Endothelial cell of umbilical vein (primary cell): ENCODE measurements at regions of chr16 and their contacts with region 1.

Region 1: GRCh38 chr16:24580665-24581064 is 41.3 kb downstream of the RBBP6 start:
- DNase-seq: peak; percentile 55
- H3K4me3 ChIP-seq: no peak overlapping the region
- H3K27ac ChIP-seq: no peak overlapping the region
- H3K4me1 ChIP-seq: peaks cover 9% of the 10 kb centered on the region
- H3K27me3 ChIP-seq: no peaks in the 10 kb centered on the region
- CTCF ChIP-seq: peak; percentile 14 to 15
- POLR2A ChIP-seq: no peak

Region 2: GRCh38 chr16:24645739-24646645 is 65.3 kb after region 1 on chr16:
- CTCF ChIA-PET with region 1: interaction called, 4 read pairs
- POLR2A ChIA-PET with region 1: no interaction called
- dilution Hi-C with region 1: no loop called
- intact Hi-C with region 1: loop called (anchors 5 kb)
- DNase-seq: peak; percentile 99
- H3K4me3 ChIP-seq: no peak overlapping the region
- H3K27ac ChIP-seq: peak overlapping the region; percentile 71
- H3K4me1 ChIP-seq: peaks cover 14% of the 10 kb centered on the region
- H3K27me3 ChIP-seq: no peaks in the 10 kb centered on the region
- CTCF ChIP-seq: no peak
- POLR2A ChIP-seq: no peak

Region 3: DNA sequence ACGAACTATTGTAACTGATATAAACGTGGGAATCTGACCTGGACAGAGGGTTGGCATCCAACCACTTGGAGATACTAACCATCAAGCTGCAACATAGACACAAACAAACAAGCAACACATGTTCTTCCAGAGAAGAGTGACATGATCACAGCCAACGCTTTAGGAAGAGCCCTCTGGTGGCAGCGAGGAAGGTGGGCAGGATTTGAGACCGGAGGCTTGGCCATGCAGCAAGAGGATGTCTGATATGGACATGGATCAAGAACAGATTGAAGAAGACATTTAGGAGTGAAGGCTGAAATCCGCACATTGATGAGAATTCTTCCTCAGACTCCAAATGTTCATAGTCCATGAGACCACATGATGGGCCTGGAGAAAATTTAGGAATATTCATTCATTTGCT is 108.5 kb after region 1 on chr16:
- CTCF ChIA-PET with region 1: interaction called, 31 read pairs
- POLR2A ChIA-PET with region 1: no interaction called
- dilution Hi-C with region 1: no loop called
- intact Hi-C with region 1: loop called (anchors 2 kb)
- DNase-seq: peak; percentile 42
- H3K4me3 ChIP-seq: no peak overlapping the region
- H3K27ac ChIP-seq: no peak overlapping the region
- H3K4me1 ChIP-seq: peaks cover 14% of the 10 kb centered on the region
- H3K27me3 ChIP-seq: no peaks in the 10 kb centered on the region
- CTCF ChIP-seq: peak; percentile 56
- POLR2A ChIP-seq: no peak

Region 4: GRCh38 chr16:24789881-24790280 is 209.2 kb after region 1 on chr16:
- CTCF ChIA-PET with region 1: interaction called, 3 read pairs
- POLR2A ChIA-PET with region 1: no interaction called
- dilution Hi-C with region 1: no loop called
- intact Hi-C with region 1: loop called (anchors 2 kb)
- DNase-seq: no peak
- H3K4me3 ChIP-seq: no peak overlapping the region
- H3K27ac ChIP-seq: no peak overlapping the region
- H3K4me1 ChIP-seq: no peaks in the 10 kb centered on the region
- H3K27me3 ChIP-seq: no peaks in the 10 kb centered on the region
- CTCF ChIP-seq: no peak
- POLR2A ChIP-seq: no peak